GM13977 (cell line): ENCODE measurements at regions of chr1 and their contacts with region 1.

Region 1: DNA sequence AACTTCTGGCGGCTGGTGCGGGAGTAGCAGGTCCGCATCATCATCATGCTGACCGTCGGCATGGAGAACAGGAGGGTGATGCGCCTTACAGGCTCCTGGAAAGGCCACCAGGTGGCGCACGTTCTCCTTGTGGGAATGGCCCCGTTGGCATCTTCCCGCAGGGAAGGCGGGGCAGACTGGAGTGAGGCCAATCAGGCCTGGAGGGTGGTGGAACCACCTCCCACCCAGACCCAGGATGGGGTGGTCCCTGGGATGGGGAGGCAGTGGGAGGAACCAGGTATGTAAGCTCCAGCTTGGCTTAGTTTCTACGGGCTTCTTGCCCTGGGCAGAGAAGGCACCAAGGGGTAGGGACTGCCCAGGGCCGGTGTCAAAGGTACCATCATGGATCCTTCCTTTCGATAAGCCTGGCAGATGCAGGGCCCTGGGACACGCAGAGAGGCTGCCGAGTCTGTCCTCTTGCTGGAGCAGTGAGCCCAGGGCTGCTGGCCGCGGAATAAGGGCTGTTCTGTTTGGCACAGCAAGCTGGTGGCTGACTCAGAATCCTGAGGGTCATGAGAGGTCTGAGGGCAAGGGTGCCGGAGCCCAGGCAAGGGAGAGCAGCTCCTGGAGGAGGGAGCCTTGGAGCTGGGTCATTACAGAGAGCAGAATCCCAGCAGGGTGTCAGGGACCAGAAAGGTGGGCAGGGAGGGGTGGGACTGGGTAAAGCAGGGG is 8.7 kb upstream of the LGR6 start:
- DNase-seq: peak; percentile 73
- CTCF ChIP-seq: peak; percentile 86

Region 2: DNA sequence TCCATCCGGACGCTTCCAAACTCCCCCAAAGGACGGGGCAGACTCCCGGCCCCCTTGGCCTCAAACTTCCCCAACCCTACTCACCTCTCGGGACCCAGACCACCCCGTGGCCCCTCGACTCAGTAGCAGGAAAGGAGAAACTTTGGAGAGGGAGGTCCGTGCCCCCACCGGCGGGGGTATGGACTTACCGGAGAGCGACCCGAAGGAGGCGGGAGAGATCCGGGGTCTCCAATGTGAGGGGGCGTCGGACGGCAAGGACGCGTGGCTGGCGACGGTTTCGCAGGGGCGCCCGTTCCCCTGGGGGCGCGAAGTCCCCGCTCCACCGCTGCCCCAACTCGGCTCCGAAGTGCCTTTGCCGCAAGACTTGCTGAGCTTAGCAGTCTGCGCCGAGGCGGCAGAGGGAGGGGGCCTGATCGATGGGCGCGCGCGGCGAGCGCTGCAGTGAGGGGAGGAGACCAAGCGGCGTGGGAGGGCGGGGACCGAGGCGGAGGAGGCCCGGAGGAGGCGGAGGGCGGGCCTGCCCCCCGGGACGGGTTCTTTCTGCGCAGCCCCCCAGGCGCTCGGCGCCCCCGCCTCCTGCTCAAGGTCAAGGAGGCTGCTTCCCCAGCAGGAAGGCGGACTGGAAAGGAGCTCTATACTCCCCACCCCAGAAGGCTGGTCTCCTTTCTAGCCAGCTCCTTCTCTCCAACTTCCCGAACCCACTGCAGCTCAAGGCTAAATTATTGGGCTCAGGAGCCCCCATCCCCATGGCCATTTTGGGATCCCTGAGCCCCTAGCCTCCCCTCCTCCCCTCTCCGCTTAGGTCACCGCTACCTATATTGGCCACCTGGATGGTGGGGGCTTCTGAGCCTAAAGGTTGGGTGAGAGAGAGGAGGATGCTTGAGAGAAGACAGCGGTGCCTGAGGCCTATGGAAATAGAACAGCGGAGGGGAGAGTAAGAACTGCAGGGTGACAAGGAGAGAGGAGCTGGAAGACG is 525.5 kb after region 1 on chr1 and contains the start of gene SYT2:
- in situ Hi-C with region 1: loop called (anchors 25 kb)
- DNase-seq: no peak
- CTCF ChIP-seq: no peak